Activated CD4-positive, alpha-beta memory T cell treated with anti-CD3 and anti-CD28 coated beads, Interleukin-2, amount 10 ng/mL, durations not matched to agents 7 days and 5 days (primary cell): ENCODE measurements at regions of chr3 and their contacts with region 1.

Region 1: GRCh38 chr3:123652346-123652984 is 67.6 kb upstream of the HACD2 start:
- DNase-seq: peak; percentile 28
- H3K4me3 Mint-ChIP-seq: no peak overlapping the region
- H3K27ac Mint-ChIP-seq: no peak overlapping the region
- H3K4me1 Mint-ChIP-seq: no peaks in the 10 kb centered on the region
- H3K27me3 Mint-ChIP-seq: no peaks in the 10 kb centered on the region

Region 2: GRCh38 chr3:123642182-123642956 is 10.1 kb before region 1 on chr3:
- CTCF ChIA-PET with region 1: interaction called, 59 read pairs
- POLR2A ChIA-PET with region 1: no interaction called
- DNase-seq: peak; percentile 69
- H3K4me3 Mint-ChIP-seq: no peak overlapping the region
- H3K27ac Mint-ChIP-seq: no peak overlapping the region
- H3K4me1 Mint-ChIP-seq: no peaks in the 10 kb centered on the region
- H3K27me3 Mint-ChIP-seq: peaks cover 3% of the 10 kb centered on the region

Region 3: GRCh38 chr3:123667784-123668183 is 15.3 kb after region 1 on chr3:
- CTCF ChIA-PET with region 1: no interaction called
- POLR2A ChIA-PET with region 1: no interaction called
- DNase-seq: no peak
- H3K4me3 Mint-ChIP-seq: no peak overlapping the region
- H3K27ac Mint-ChIP-seq: no peak overlapping the region
- H3K4me1 Mint-ChIP-seq: peaks cover 4% of the 10 kb centered on the region
- H3K27me3 Mint-ChIP-seq: peaks cover 18% of the 10 kb centered on the region

Region 4: GRCh38 chr3:123732473-123733157 is 80.2 kb after region 1 on chr3:
- CTCF ChIA-PET with region 1: no interaction called
- POLR2A ChIA-PET with region 1: no interaction called
- DNase-seq: no peak
- H3K4me3 Mint-ChIP-seq: no peak overlapping the region
- H3K27ac Mint-ChIP-seq: no peak overlapping the region
- H3K4me1 Mint-ChIP-seq: no peaks in the 10 kb centered on the region
- H3K27me3 Mint-ChIP-seq: peaks cover 25% of the 10 kb centered on the region